ENCODE measurements at regions of chr2 and their contacts with region 1.

Region 1: GRCh38 chr2:55175254-55176025 is 56.7 kb downstream of the CLHC1 start:
- DNase-seq: no peak
- ATAC-seq: peak; percentile 86
- H3K4me3 Mint-ChIP-seq: peak overlapping the region; percentile 8
- H3K27ac Mint-ChIP-seq: no peak overlapping the region
- H3K4me1 Mint-ChIP-seq: peaks cover 7% of the 10 kb centered on the region
- H3K27me3 Mint-ChIP-seq: no peaks in the 10 kb centered on the region
- CTCF ChIP-seq: no peak

Region 2: DNA sequence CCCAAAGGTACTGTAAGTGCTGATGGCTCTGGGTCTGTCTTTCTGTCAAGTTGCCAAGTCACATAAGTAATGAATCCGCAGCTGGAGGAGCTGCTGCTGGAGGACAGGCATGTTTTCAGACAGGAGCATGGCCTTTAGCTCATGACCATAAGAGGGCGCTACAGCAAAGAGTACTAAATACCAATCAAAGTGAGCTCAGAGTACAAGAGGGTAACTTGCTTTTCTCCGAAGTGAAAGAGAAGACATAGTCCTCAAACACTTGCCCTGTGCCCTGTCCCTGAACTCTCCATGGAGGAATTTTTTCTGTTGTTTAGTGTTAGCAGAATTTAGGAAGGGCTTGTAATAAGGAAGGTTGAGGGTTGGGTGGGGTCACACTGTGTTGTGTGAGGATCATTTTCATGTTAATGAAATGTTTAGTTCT is 510.0 kb before region 1 on chr2:
- CTCF ChIA-PET with region 1: interaction called, 8 read pairs
- POLR2A ChIA-PET with region 1: no interaction called
- intact Hi-C with region 1: loop called (anchors 2 kb)
- DNase-seq: no peak
- ATAC-seq: peak; percentile 52
- H3K4me3 Mint-ChIP-seq: no peak overlapping the region
- H3K27ac Mint-ChIP-seq: no peak overlapping the region
- H3K4me1 Mint-ChIP-seq: no peaks in the 10 kb centered on the region
- H3K27me3 Mint-ChIP-seq: no peaks in the 10 kb centered on the region
- CTCF ChIP-seq: no peak

Region 3: GRCh38 chr2:54755641-54756326 is 419.7 kb before region 1 on chr2:
- CTCF ChIA-PET with region 1: no interaction called
- POLR2A ChIA-PET with region 1: no interaction called
- intact Hi-C with region 1: loop called (anchors 5 kb)
- DNase-seq: no peak
- ATAC-seq: peak; percentile 67
- H3K4me3 Mint-ChIP-seq: peak overlapping the region; percentile 74
- H3K27ac Mint-ChIP-seq: peak overlapping the region; percentile 92
- H3K4me1 Mint-ChIP-seq: peaks cover 50% of the 10 kb centered on the region
- H3K27me3 Mint-ChIP-seq: no peaks in the 10 kb centered on the region
- CTCF ChIP-seq: no peak

Region 4: DNA sequence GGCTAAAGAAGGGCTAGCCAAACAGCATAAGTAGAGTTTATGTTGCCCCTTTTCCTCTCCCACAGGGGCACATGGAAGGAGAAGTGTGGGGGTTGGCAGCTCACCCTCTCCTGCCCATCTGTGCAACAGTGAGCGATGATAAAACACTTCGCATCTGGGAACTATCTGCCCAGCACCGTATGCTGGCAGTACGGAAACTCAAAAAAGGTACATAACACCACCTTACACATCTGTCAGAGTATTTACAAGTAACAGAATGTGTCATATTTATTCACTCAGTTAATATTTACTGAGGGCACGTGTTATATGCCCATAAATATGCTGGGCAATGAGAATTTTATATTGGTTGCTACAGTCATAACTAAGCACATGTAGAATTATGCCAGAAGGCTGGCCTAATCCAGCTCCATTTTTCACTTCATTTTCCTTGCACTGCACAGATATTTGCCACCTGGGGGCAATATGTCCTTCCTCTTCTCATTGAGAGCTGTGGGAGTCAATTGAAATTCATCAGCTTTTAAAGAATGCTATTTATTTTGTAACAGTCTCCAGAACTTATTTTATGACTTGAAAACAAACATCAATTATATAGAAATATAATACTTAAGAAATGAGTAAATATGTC is 275.8 kb before region 1 on chr2:
- CTCF ChIA-PET with region 1: interaction called, 51 read pairs
- POLR2A ChIA-PET with region 1: no interaction called
- intact Hi-C with region 1: loop called (anchors 1 kb)
- DNase-seq: no peak
- ATAC-seq: no peak
- H3K4me3 Mint-ChIP-seq: no peak overlapping the region
- H3K27ac Mint-ChIP-seq: no peak overlapping the region
- H3K4me1 Mint-ChIP-seq: no peaks in the 10 kb centered on the region
- H3K27me3 Mint-ChIP-seq: no peaks in the 10 kb centered on the region
- CTCF ChIP-seq: no peak

Region 5: DNA sequence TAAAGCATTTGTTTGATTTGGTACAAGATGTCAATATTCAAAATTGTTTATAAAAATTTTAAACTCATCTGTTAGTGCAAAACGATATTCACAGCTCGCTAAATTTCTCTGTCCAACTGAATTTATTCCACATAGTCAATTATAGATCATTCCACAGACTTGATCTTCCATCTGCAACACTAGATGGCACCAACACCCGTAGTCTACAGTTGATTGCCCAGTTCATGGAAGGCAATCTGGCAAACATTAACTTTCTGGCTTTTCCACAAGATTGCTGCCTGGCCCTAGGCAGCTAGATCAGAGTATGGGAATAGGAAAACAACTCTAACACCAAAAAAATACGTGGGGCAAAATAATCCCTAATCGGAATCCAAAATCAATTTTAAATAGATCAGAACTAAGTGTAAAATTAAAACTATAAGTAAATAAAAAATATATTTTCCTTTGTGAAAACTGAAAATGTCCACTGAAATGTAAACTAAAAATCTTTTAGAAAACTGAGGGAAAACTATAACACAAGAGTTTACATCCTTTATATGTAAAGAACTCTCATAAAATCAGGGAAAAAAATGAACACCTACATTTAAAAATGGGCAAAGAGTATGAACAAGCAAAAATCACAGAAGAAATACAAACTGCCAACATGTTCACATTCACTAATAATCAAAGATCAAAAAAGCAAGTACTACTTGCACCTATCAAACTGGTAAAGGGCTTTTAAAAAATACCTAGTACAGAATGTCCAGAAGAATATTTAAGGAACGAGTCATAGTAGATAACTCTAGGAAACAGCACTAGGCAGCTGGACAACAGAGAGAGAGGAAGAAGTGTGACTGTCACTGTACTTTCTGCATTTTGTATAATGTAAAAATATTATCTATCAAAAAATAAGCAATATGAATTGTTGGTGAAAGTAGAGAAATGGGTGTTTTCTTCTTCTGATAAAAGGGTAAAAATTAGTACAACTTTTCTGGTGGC is 160.2 kb before region 1 on chr2:
- CTCF ChIA-PET with region 1: interaction called, 96 read pairs
- POLR2A ChIA-PET with region 1: no interaction called
- intact Hi-C with region 1: loop called (anchors 1 kb)
- DNase-seq: no peak
- ATAC-seq: no peak
- H3K4me3 Mint-ChIP-seq: no peak overlapping the region
- H3K27ac Mint-ChIP-seq: no peak overlapping the region
- H3K4me1 Mint-ChIP-seq: peaks cover 52% of the 10 kb centered on the region
- H3K27me3 Mint-ChIP-seq: no peaks in the 10 kb centered on the region
- CTCF ChIP-seq: peak; percentile 49

Region 6: GRCh38 chr2:55431982-55432627 is 256.7 kb after region 1 on chr2:
- CTCF ChIA-PET with region 1: no interaction called
- POLR2A ChIA-PET with region 1: no interaction called
- intact Hi-C with region 1: loop called (anchors 5 kb)
- DNase-seq: no peak
- ATAC-seq: no peak
- H3K4me3 Mint-ChIP-seq: no peak overlapping the region
- H3K27ac Mint-ChIP-seq: no peak overlapping the region
- H3K4me1 Mint-ChIP-seq: no peaks in the 10 kb centered on the region
- H3K27me3 Mint-ChIP-seq: no peaks in the 10 kb centered on the region
- CTCF ChIP-seq: no peak

Measured in activated B cell treated with CpG ODN at 0.5 μM for 24 hours (primary cell).